Motor neuron (in vitro differentiated cells): ENCODE measurements at regions of chr5 and their contacts with region 1.

Region 1: DNA sequence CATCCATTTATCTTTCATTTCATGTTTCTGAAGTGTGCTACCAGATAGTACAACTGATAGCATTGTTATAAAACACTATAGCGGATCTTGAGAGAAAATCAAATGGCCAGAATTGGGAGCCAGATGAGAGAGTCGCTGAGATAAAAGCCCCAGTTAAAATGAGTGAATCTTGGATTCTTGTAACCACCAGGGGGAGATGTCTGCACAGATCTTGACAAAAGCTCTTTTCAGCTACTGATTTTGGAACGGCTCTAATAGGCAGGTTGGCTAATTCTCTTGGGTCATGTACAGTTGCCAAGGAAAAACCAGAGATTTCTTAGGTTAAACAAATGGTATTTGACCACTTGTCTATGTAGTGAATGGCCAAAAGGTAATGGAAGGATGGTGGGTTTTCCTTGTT is 21.7 kb downstream of the F2RL2 start:
- ATAC-seq: peak in 5 of 8 experiments; percentile 50 to 72 (median 61)
- H3K4me3 ChIP-seq: no peak overlapping the region
- H3K27ac ChIP-seq: no peak overlapping the region
- H3K4me1 ChIP-seq: no peaks in the 10 kb centered on the region

Region 2: DNA sequence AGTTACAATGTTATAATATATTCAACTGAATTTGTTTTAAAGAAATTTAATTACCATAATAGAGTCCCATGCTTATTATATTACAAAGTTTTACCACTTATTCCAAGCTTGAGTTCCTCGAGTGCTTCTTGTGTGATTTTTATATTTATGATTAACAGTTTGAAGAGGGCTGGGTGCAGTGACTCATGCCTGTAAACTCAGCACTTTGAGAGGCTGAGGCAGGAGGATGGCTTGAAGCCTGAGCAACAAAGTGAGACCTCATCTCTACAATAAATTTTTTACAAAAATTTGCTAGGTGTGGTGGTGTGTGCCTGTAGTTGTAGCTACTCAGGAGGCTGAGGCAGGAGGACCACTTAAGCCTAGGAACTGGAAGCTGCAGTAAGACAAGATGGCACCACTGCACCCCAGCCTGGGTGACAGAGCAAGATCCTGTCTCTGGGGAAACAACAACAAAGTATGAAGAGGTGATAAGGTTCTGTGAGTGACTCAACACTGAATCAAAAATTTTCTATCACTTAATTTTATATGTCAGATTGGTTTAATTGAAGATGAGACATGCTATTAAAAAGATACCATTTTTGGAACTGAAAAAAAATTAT is 893.5 kb before region 1 on chr5:
- in situ Hi-C with region 1: no loop called
- ATAC-seq: no peak
- H3K4me3 ChIP-seq: no peak overlapping the region
- H3K27ac ChIP-seq: no peak overlapping the region
- H3K4me1 ChIP-seq: no peaks in the 10 kb centered on the region

Region 3: DNA sequence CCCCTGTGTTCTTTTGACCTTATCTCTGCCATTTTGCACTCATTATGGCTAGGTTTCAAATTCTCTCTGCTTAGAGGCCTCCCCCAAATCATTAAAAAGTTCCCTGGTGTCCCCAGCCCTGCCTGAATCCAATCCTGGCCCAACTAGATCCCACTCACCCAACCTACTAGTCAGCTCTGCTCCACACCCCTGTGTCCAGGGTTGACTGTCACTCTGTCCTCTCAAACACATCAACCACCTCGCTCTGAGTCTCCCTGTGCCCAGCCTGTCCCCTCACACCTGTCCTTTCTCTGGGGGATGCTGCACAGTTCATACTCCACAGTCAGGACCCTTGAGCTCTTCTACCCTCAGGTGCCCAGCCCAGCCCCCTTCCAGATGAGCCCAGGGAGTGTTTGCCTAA is 672.5 kb before region 1 on chr5:
- in situ Hi-C with region 1: no loop called
- ATAC-seq: no peak
- H3K4me3 ChIP-seq: no peak overlapping the region
- H3K27ac ChIP-seq: no peak overlapping the region
- H3K4me1 ChIP-seq: no peaks in the 10 kb centered on the region

Region 4: GRCh38 chr5:76443066-76443800 is 158.2 kb before region 1 on chr5:
- in situ Hi-C with region 1: no loop called
- ATAC-seq: no peak
- H3K4me3 ChIP-seq: no peak overlapping the region
- H3K27ac ChIP-seq: no peak overlapping the region
- H3K4me1 ChIP-seq: no peaks in the 10 kb centered on the region

Region 5: GRCh38 chr5:76660360-76660759 is 58.9 kb after region 1 on chr5:
- in situ Hi-C with region 1: no loop called
- ATAC-seq: no peak
- H3K4me3 ChIP-seq: no peak overlapping the region
- H3K27ac ChIP-seq: no peak overlapping the region
- H3K4me1 ChIP-seq: no peaks in the 10 kb centered on the region

Region 6: GRCh38 chr5:76766746-76767145 is 165.3 kb after region 1 on chr5:
- in situ Hi-C with region 1: loop called in 1 of 9 experiments (anchors 25 kb)
- ATAC-seq: no peak
- H3K4me3 ChIP-seq: no peak overlapping the region
- H3K27ac ChIP-seq: no peak overlapping the region
- H3K4me1 ChIP-seq: no peaks in the 10 kb centered on the region

Region 7: DNA sequence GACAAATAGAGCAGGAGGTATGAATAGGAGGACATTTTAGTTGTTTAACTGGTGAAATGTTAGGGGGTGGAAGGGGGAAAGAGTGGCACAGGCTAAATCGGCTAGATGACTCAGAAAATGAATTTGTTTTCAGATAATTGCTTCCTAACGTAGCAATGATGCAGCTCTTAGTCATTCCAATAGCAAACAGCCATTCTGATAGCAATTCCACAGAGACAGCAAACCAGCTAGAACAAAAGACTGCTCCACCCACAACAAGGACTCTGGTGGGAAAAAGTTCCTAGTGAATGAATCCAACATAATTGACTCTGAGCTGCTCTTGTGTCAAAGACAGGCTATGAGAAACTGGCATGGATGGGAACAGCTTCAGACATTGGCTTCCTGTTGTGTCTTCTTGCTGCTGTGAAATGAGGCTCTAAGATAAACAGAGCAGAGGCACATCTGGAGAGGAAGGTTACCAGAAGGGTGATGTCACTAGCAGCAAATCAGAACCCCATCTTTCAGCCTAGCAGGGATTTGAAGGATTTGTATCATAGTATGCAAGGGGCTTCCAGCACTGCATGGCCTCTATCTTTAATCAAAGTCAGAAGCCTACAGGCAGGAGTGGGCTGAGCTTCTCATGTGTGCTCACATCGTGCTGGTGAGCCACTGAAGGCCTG is 189.3 kb after region 1 on chr5:
- in situ Hi-C with region 1: loop called in 1 of 9 experiments (anchors 25 kb)
- ATAC-seq: peak; percentile 51 to 92 (median 88)
- H3K4me3 ChIP-seq: no peak overlapping the region
- H3K27ac ChIP-seq: peak overlapping the region; percentile 66 to 68
- H3K4me1 ChIP-seq: peaks cover 29 to 33% of the 10 kb centered on the region in 2 donors